ENCODE measurements at regions of chr6 and their contacts with region 1.

Region 1: DNA sequence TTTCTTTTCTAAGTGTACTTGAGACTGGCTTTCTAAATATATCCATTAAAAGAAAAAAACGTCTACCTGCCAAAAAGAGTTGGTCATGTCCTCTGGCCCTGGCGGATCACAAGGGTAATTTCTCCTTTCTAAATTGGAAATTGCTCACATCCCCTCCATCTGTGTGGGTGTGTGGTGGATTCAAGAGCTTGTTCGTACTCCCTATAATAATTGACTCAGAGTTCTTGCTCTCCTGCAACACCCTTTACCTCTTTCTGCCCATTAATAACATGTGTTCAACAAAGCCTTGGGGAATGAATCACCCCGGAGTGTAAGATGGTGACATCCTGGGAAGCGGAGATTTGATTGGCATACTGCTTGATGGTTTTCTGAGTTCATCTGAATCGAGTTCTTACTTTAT is 263.8 kb downstream of the ALDH8A1 start:
- DNase-seq: no peak
- ATAC-seq: no peak
- H3K4me3 ChIP-seq: no peak overlapping the region
- H3K27ac ChIP-seq: no peak overlapping the region
- H3K4me1 ChIP-seq: peaks cover 4 to 14% of the 10 kb centered on the region in 2 donors
- H3K27me3 ChIP-seq: no peaks in the 10 kb centered on the region
- CTCF ChIP-seq: no peak
- POLR2A ChIP-seq: no peak

Region 2: DNA sequence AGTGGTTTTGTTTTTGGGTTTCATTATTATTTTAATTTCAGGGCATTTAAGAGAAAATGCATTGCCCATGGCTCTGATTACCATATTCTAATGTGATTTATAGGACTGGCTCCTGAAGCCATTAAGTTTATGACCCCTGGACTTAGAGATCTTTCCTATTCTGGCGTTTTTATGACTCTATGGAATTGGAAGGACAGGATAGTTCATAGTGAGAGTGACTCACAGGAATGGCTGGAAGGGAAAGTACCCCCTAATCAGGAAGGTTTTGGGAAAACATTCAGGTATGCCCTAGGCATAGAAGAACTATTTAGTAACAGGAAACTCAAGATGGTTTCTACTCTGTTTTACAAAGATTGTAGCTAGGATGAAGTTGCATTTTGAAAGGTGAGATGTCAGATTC is 525.0 kb before region 1 on chr6:
- in situ Hi-C with region 1: no loop called
- intact Hi-C with region 1: loop called (anchors 2 kb)
- DNase-seq: no peak
- ATAC-seq: no peak
- H3K4me3 ChIP-seq: no peak overlapping the region
- H3K27ac ChIP-seq: no peak overlapping the region
- H3K4me1 ChIP-seq: peaks cover 0 to 8% of the 10 kb centered on the region in 2 donors
- H3K27me3 ChIP-seq: no peaks in the 10 kb centered on the region
- CTCF ChIP-seq: no peak
- POLR2A ChIP-seq: no peak

Measured in gastrocnemius medialis (tissue), 4 donors.